ENCODE measurements at regions of chr7 and their contacts with region 1.

Region 1: DNA sequence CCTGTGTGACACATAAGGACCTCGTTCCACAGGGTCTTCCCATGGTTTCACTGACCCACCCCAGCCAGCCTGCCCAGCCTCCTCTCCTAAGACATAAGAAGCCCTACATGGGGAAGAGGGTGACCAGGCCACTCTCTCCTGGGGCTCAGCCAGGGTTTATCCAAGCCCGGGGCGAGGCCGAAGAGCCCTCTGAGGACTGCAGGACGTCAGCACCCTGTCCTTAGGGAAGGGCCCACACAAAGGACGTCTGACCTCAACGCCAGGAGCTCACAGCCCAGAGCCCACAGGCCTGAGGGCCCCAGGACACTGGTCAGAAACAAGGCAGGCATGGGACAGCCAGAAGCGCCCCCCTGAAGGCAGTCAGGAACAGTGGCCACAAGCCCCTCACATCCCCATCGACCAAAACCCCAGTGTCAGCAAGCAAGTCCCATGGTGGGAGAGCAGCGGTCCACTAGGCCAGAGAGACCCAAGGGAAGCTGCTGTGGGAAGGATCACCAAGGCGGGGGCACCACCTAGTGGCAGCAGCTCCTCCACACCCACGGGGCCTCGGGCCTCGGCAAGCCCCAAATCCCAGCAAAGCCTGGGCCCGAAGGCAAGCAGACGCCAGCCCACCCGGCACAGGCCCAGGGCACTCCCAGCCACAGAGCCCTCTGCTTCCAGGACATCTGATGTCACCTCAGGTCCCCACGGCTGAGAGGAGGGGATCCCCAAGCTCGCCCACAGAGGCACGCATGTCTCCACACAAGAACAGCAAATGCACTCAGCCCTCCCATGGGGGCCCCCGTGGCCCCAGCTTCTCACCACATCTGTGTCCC is 23.4 kb downstream of the MAD1L1 start:
- DNase-seq: peak; percentile 57
- H3K4me3 ChIP-seq: no peak overlapping the region
- CTCF ChIP-seq: peak; percentile 83

Region 2: DNA sequence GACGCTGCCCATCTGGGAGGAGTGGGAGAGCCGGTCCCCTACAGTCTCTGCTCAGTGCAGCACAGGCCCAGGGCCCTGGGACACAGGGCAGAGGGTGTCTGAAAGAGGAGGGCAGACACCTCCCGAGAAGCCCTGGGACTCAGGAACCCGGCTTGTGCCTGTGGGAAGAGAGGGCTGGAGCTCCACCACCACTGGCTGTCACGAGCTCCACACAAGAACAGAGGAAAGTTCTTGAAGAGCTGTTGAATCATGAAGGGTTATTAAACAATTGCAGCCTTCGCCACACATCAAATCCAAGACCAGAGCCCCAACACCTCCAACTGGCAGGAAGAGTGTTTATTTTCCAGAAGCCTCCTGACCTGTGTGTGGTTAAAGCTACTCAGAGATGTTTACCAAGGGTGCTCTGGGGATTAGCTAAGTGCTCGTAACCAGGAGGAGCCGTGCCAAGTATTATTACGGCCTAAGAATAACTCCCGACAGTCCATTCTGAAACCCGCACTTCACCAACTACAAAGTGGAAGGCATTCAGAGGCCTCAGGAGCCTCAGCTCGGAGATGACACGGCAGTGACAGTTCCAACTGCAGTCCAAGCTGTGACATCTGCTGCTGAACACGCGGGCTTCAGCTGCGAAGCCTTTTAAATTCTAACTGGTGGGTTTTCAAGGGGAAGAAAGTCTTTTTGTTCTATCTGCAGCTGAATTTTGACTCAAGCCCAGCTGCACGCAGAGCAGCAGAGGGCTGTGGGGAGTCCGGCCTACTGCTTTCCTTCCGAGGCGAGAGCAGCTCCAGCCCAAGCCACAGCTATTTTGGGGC is 51.7 kb before region 1 on chr7:
- in situ Hi-C with region 1: loop called (anchors 10 kb)
- DNase-seq: peak; percentile 97
- H3K4me3 ChIP-seq: no peak overlapping the region
- CTCF ChIP-seq: no peak

Measured in astrocyte of the cerebellum (primary cell).